Posterior cingulate gyrus (tissue), 11 donors: ENCODE measurements at regions of chr2 and their contacts with region 1.

Region 1: DNA sequence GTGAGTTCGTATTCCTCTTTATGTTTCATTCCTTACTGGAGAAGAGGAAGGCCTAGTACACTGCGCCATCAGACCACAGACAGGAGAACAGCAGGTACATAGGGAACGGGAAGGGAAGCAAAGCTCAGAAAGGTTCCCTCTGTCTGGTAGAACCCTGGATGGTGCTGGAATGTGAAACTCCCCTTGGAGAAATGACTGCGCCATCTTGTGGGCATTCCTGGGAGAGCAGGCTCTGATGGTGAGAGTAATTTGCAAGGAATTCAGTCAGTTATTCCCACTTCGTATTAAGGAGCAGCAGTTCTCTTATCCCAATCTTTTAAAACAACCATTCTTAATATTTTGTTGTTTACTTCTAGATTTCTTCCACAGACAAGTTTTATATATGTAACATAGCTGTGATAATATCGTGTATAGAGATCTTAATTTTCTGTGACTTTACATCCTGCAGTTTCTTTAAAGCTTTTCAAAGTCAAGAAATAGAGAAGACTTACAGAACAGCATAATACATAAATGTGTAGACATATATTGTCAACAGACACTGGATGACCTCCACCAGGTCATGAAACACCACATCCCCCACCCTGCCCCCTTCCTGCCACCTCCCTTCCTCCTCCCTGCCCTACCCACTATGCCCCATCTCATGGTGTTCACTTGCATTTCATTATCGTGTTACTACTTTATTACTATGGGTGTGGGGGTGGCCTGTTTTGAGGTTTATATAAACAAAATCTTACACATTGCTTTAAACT is 83.9 kb downstream of the ARHGEF4 start:
- DNase-seq: peak; percentile 69 to 97 (median 90)

Region 2: DNA sequence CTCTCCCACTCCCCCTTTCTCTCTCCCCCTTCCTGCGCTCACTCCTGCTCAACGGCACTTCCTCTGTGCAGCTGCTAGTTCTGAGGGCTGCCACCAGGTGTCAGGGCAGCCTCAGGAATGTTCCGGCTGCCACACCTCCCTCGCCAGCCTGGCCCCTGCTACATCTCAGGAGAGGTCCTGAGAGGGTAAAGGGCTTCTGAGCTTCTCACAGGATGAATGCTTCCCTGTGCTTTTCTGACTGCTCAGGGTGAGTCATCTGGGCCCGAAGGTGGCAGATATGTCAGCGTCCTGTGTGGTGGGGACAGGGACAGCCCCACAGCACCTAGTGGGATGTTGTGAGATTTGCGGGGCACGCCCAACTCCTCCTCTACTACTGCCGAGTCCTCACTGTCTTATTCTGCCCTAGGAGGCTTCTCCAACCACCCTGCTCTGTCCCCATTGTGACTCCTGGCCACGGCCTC is 233.5 kb after region 1 on chr2:
- intact Hi-C with region 1: loop called (anchors 10 kb)
- DNase-seq: peak; percentile 32 to 96 (median 60)